PC-9 (cell line): ENCODE measurements at regions of chr2 and their contacts with region 1.

Region 1: DNA sequence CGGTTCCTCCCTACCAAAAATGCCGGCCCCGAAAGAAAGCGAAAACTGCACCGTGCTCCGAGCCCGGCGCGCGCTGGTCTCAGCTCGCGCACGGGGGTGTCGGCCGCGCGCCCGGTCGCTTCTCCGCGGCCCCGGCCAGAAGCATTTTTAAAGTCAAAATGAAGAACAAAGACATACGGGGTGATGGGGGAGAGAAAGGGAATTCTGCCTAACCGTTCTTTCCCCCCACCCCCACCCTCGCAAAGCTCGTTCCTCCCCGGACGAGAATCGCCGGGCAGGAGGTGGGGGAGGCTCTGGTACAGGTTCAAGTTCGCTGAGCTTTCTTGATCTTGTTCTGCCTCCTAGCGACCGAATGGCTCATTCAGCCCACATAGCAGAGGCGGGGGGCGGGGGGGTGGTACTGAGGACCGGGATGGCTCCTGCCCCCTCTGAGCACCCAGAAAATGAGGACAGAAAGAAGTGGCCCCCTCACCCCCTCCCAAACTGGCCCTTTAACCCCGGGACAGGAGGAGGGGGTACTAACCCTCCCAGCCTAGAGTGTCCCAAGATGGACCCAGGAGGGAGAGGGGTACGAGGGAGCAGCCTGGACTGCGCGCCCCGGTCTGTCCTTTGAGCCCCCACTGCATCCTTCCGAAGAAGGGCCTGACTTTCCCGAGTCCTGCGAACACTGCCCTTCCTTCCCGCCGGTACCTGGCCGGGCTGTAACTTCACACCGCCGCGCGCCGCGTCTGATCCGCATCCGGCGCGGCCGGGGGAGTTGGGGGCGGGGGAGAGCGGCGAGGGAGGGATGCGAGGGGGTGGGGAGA is 3.1 kb downstream of the BCL11A start:
- DNase-seq: no peak
- H3K4me3 ChIP-seq: no peak overlapping the region; the same call in 1 of the 2 replicates
- H3K27ac ChIP-seq: no peak overlapping the region
- H3K4me1 ChIP-seq: 0 out of 2 replicates have a peak, but pooled peaks cover 12% of the 10 kb centered on the region
- H3K27me3 ChIP-seq: peaks cover 81% of the 10 kb centered on the region
- CTCF ChIP-seq: no peak

Region 2: GRCh38 chr2:58620093-58620492 is 1930.3 kb before region 1 on chr2:
- CTCF ChIA-PET with region 1: interaction called, 11 read pairs
- POLR2A ChIA-PET with region 1: no interaction called
- intact Hi-C with region 1: no loop called
- DNase-seq: peak; percentile 23 to 70
- H3K4me3 ChIP-seq: peak overlapping the region; percentile 12; the same call in 1 of the 2 replicates
- H3K27ac ChIP-seq: peak overlapping the region; percentile 65
- H3K4me1 ChIP-seq: peaks cover 30% of the 10 kb centered on the region
- H3K27me3 ChIP-seq: no peaks in the 10 kb centered on the region
- CTCF ChIP-seq: no peak